PC-9 (cell line): ENCODE measurements at regions of chr1 and their contacts with region 1.

Region 1: DNA sequence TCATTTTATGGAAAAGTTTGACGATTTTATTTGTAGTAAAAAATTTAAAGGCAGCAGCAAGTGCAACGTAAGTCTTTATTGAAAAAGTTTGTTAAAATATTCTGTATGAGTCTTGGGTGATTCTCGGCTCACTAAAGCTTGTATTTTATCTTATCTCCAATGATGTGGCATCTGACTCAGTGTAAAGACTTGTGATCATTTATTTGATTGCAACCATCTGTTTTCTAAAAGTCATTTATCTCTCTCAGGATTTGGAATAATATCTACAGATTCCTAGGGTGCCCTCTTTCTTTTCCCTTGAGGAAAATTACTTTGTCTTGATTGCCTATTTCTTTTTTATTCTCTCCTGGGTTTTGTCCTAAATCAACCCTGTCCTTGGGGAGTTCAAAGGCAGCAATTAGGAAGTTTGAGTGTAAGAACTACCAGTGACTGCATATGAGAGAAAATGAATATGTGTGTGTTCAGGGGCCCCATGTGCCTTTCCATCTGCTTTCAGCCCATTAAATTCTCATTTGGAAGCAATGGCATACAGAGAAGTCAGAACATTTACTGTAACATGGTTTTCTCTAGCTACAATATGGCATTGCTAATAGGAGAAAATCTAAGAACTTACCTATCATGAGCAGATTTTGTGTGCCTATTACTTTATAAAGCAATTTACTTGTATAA is 575.0 kb upstream of the CHRM3 start:
- DNase-seq: no peak
- H3K4me3 ChIP-seq: no peak overlapping the region
- H3K27ac ChIP-seq: no peak overlapping the region
- H3K4me1 ChIP-seq: no peaks in the 10 kb centered on the region
- H3K27me3 ChIP-seq: no peaks in the 10 kb centered on the region
- CTCF ChIP-seq: no peak

Region 2: GRCh38 chr1:238450976-238451375 is 360.4 kb before region 1 on chr1:
- CTCF ChIA-PET with region 1: no interaction called
- POLR2A ChIA-PET with region 1: no interaction called
- intact Hi-C with region 1: no loop called
- DNase-seq: no peak
- H3K4me3 ChIP-seq: no peak overlapping the region
- H3K27ac ChIP-seq: no peak overlapping the region
- H3K4me1 ChIP-seq: no peaks in the 10 kb centered on the region
- H3K27me3 ChIP-seq: no peaks in the 10 kb centered on the region
- CTCF ChIP-seq: no peak

Region 3: DNA sequence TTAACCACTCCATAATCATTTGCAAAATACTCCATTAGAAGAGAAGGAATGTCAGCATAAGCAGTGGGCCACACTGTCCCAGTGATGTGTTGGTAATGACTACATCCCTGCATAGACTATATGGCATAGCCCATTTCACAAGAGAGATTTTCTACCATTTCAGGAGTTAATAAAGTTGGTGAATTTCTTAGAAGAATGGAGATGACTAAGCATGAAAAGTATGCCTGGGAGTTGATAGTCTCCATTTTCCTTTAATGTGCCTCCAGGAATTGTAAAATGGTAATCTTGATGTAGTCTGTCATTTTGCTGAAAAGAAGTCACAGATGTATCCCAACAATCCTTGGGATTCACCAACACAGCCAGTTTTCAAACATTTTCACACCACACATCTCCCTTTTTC is 33.8 kb before region 1 on chr1:
- CTCF ChIA-PET with region 1: no interaction called
- POLR2A ChIA-PET with region 1: no interaction called
- intact Hi-C with region 1: loop called (anchors 5 kb)
- DNase-seq: no peak
- H3K4me3 ChIP-seq: no peak overlapping the region
- H3K27ac ChIP-seq: no peak overlapping the region
- H3K4me1 ChIP-seq: no peaks in the 10 kb centered on the region
- H3K27me3 ChIP-seq: no peaks in the 10 kb centered on the region
- CTCF ChIP-seq: no peak